Activated B cell treated with CpG ODN at 0.5 μM for 24 hours (primary cell): ENCODE measurements at regions of chr17 and their contacts with region 1.

Region 1: GRCh38 chr17:30148376-30148775 is 31.8 kb downstream of the NSRP1 start:
- DNase-seq: no peak
- ATAC-seq: no peak
- H3K4me3 Mint-ChIP-seq: no peak overlapping the region
- H3K27ac Mint-ChIP-seq: no peak overlapping the region
- H3K4me1 Mint-ChIP-seq: peaks cover 10% of the 10 kb centered on the region
- H3K27me3 Mint-ChIP-seq: no peaks in the 10 kb centered on the region
- CTCF ChIP-seq: no peak

Region 2: DNA sequence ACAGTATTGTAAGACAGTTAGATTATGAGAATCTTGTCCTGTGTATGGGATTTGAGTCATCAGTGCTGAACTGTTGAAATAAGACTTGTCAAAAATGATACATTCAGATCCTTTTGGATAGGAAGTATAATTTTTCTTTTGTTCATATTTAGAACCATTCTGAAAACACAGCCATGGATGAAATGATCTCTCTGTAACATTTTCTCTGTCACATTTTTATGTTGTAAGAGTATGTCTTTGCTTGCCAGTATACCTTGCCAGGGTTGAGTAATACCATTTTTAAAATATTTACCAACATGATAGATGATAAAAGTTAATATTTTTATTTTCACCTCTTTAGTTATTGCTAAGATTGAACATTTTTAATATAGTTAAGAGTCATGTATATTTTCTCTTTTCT is 13.2 kb after region 1 on chr17:
- CTCF ChIA-PET with region 1: interaction called, 3 read pairs
- POLR2A ChIA-PET with region 1: interaction called, 12 read pairs
- intact Hi-C with region 1: loop called (anchors 2 kb)
- DNase-seq: no peak
- ATAC-seq: no peak
- H3K4me3 Mint-ChIP-seq: no peak overlapping the region
- H3K27ac Mint-ChIP-seq: no peak overlapping the region
- H3K4me1 Mint-ChIP-seq: peaks cover 56% of the 10 kb centered on the region
- H3K27me3 Mint-ChIP-seq: no peaks in the 10 kb centered on the region
- CTCF ChIP-seq: no peak